Transverse colon (tissue), 4 donors: ENCODE measurements at regions of chr9 and their contacts with region 1.

Region 1: GRCh38 chr9:118331622-118332045 is 627.4 kb downstream of the TLR4 start:
- DNase-seq: no peak
- H3K4me3 ChIP-seq: no peak overlapping the region
- H3K27ac ChIP-seq: no peak overlapping the region
- H3K4me1 ChIP-seq: no peaks in the 10 kb centered on the region
- H3K27me3 ChIP-seq: no peaks in the 10 kb centered on the region
- CTCF ChIP-seq: no peak
- EP300 ChIP-seq: no peak
- POLR2A ChIP-seq: no peak

Region 2: GRCh38 chr9:118446943-118447639 is 115.5 kb after region 1 on chr9:
- in situ Hi-C with region 1: loop called in 1 of 4 experiments (anchors 25 kb)
- intact Hi-C with region 1: no loop called
- DNase-seq: no peak
- H3K4me3 ChIP-seq: no peak overlapping the region
- H3K27ac ChIP-seq: no peak overlapping the region
- H3K4me1 ChIP-seq: no peaks in the 10 kb centered on the region
- H3K27me3 ChIP-seq: no peaks in the 10 kb centered on the region
- CTCF ChIP-seq: no peak
- EP300 ChIP-seq: no peak
- POLR2A ChIP-seq: no peak